Astrocyte of the cerebellum (primary cell): ENCODE measurements at regions of chr2 and their contacts with region 1.

Region 1: GRCh38 chr2:16665748-16666448 is at the start of gene CYRIA:
- DNase-seq: no peak
- H3K4me3 ChIP-seq: peak within 1 kb of the TSS; percentile 78
- CTCF ChIP-seq: no peak

Region 2: DNA sequence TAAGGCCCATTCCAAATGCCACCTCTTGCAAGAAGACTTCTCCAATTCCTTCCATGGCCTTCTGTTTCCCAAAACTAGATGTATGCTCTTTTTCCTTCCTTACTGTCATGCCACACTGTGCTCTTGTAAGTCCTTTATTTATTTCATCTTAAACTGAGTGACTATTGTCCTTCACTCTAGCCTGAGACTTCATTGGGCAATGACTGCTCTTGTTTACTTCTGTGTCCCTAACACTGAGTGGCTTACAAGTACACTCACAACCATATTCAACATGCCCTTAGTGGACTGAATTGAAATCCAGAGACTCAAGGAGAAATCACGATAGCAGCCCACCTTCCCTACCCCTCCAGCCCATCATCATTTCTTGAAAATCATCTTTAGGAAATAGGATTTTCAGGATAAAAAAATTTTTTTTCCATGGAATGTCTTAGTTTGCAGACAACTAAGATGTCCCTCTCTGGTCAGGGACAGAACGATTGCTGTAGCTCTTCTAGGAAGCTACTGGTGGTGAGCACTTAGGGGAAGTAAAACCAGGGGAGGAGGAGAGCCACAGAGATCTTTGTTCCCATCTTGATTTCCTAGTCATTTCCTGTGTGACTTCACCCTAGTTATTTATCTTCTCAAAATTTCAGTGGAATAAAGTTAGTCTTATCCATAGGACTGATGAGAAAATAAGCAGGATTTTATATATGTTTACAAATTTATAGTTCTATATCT is 80.9 kb before region 1 on chr2:
- in situ Hi-C with region 1: no loop called
- DNase-seq: no peak
- H3K4me3 ChIP-seq: no peak overlapping the region
- CTCF ChIP-seq: no peak

Region 3: GRCh38 chr2:16739778-16740581 is 74.1 kb after region 1 on chr2:
- in situ Hi-C with region 1: loop called (anchors 5 kb)
- DNase-seq: no peak
- H3K4me3 ChIP-seq: no peak overlapping the region
- CTCF ChIP-seq: no peak